Naive thymus-derived CD4-positive, alpha-beta T cell (primary cell): ENCODE measurements at regions of chr17 and their contacts with region 1.

Region 1: GRCh38 chr17:29180034-29180787 is at the start of gene MYO18A:
- DNase-seq: peak; percentile 58 to 85 (median 71)
- ATAC-seq: peak; percentile 98
- H3K4me3 ChIP-seq: peak within 1 kb of the TSS; percentile 37
- H3K4me3 Mint-ChIP-seq: peak within 1 kb of the TSS; percentile 40 to 82 (median 56)
- H3K27ac ChIP-seq: no peak within 1 kb of the TSS
- H3K27ac Mint-ChIP-seq: peak within 1 kb of the TSS in 7 of 9 donors; percentile 9 to 70 (median 48)
- H3K4me1 ChIP-seq: peaks cover 10 to 13% of the 10 kb centered on the region in 2 donors
- H3K4me1 Mint-ChIP-seq: peaks cover 5 to 33% (median 19%) of the 10 kb centered on the region in 7 donors
- H3K27me3 ChIP-seq: no peaks in the 10 kb centered on the region
- H3K27me3 Mint-ChIP-seq: peaks cover 0 to 13% (median 0%) of the 10 kb centered on the region in 5 donors
- total RNA-seq, gene MYO18A: 89.5 to 144 (median 103) TPM

Region 2: DNA sequence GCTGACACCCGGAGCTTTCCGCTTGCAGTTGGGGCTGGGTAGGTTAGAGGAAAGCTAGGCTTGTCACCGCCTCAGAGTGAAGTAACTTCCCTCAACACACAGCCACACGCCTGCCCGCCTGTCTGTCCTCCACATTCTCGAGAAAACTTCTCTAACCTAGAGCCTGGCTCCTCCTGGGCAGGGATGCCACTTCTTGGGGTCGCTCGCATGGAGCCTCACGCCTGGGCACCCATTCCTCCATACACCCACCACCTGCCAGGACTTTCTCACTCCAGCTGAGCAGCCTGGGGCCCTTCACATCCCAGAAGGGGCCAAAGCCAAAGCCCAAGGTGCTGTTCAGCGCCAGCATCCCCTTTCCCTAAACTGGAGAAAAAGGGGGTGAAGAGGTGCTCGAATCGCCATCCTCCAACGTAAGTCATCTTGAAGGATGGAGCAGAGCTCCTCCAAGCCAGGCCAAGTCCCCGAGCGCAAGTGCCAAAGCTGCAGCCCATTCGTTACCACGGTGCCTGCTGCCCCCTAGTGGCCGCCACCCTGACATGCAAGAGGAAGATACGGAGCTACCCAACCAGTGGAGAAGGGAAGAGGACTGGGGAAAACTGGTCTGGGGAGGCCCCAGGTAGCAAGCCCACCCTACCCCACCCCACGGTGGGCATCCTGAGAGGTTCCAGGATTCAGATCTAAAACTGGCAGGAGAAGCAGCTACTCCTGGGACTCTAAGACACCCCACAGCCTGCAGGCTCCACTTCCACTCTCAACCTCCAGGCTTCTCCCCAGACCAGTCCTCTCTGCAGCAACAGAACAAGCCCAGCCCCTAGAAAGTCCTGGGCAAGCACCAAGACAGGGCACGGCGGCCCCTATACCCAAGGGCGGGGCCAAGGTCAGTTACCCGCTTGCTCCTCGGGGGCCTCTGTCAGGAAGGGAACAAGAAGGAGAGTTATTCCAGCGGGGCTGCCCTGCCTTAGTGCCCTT is 63.1 kb before region 1 on chr17:
- CTCF ChIA-PET with region 1: interaction called, 16 read pairs
- POLR2A ChIA-PET with region 1: interaction called, 3 read pairs
- intact Hi-C with region 1: loop called in 1 of 2 experiments (anchors 2 kb)
- DNase-seq: peak; percentile 49 to 81 (median 69)
- ATAC-seq: peak; percentile 89
- H3K4me3 ChIP-seq: no peak overlapping the region
- H3K4me3 Mint-ChIP-seq: peak overlapping the region in 1 of 10 donors; percentile 44
- H3K27ac ChIP-seq: no peak overlapping the region
- H3K27ac Mint-ChIP-seq: peak overlapping the region in 5 of 9 donors; percentile 54 to 74 (median 61)
- H3K4me1 ChIP-seq: no peaks in the 10 kb centered on the region
- H3K4me1 Mint-ChIP-seq: peaks cover 0 to 11% (median 5%) of the 10 kb centered on the region in 7 donors
- H3K27me3 ChIP-seq: no peaks in the 10 kb centered on the region
- H3K27me3 Mint-ChIP-seq: no peaks in the 10 kb centered on the region

Region 3: DNA sequence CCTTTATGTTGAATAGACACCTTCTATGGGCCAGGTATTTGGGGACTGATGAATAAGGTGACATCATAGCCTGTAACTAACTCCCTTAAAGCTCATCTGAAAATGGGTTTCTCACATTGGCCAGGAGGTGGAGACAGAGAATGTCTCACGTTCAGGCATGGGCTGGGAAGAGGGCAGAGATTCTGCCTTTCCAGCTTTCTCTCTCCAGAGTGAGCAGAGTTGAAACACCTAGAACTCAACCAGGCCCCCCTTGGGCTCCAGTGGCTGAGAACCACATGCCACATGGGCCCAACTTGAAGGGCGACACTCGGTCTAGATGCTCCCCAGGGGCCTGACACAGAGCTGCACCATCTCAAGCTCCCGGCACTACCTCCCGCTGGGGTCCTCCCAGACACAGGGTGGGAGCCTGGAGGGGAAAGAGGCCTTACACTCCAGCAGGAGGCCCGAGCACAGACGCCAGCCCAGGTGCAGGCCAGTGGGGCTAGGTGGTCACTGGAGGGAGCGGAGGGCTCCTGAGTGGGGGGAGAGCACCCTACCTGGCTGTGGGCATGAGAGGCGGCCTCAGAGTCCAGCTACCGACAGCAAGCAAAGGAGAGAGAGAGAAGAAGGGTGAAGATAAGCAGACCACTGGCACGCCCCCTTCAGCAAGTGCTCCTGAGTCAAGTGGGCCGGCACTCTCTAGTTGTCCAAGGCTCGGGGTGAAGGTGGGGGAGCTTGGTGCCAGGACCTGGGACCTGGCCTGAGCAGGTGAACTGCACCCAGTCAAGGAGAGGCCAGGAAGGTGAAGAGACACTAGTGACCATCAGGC is 55.9 kb before region 1 on chr17:
- CTCF ChIA-PET with region 1: interaction called, 35 read pairs
- POLR2A ChIA-PET with region 1: interaction called, 8 read pairs
- intact Hi-C with region 1: loop called (anchors 1 kb)
- DNase-seq: peak in 6 of 9 donors; percentile 34 to 59 (median 48)
- ATAC-seq: peak; percentile 87
- H3K4me3 ChIP-seq: no peak overlapping the region
- H3K4me3 Mint-ChIP-seq: no peak overlapping the region
- H3K27ac ChIP-seq: no peak overlapping the region
- H3K27ac Mint-ChIP-seq: peak overlapping the region in 2 of 9 donors; percentile 54 to 55
- H3K4me1 ChIP-seq: no peaks in the 10 kb centered on the region
- H3K4me1 Mint-ChIP-seq: peaks cover 0 to 16% (median 5%) of the 10 kb centered on the region in 7 donors
- H3K27me3 ChIP-seq: no peaks in the 10 kb centered on the region
- H3K27me3 Mint-ChIP-seq: no peaks in the 10 kb centered on the region

Region 4: GRCh38 chr17:29140051-29140621 is 40.1 kb before region 1 on chr17:
- CTCF ChIA-PET with region 1: interaction called, 230 read pairs
- POLR2A ChIA-PET with region 1: interaction called, 11 read pairs
- intact Hi-C with region 1: loop called in 1 of 2 experiments (anchors 1 kb)
- DNase-seq: peak in 8 of 9 donors; percentile 48 to 81 (median 51)
- ATAC-seq: peak; percentile 73
- H3K4me3 ChIP-seq: peak overlapping the region; percentile 76
- H3K4me3 Mint-ChIP-seq: peak overlapping the region; percentile 83 to 98 (median 91)
- H3K27ac ChIP-seq: peak overlapping the region; percentile 79
- H3K27ac Mint-ChIP-seq: peak overlapping the region; percentile 88 to 98 (median 96)
- H3K4me1 ChIP-seq: peaks cover 35 to 43% of the 10 kb centered on the region in 2 donors
- H3K4me1 Mint-ChIP-seq: peaks cover 54 to 75% (median 66%) of the 10 kb centered on the region in 7 donors
- H3K27me3 ChIP-seq: no peaks in the 10 kb centered on the region
- H3K27me3 Mint-ChIP-seq: no peaks in the 10 kb centered on the region

Region 5: GRCh38 chr17:29155227-29155965 is 24.8 kb before region 1 on chr17:
- CTCF ChIA-PET with region 1: interaction called, 230 read pairs
- POLR2A ChIA-PET with region 1: interaction called, 27 read pairs
- intact Hi-C with region 1: loop called in 1 of 2 experiments (anchors 1 kb)
- DNase-seq: peak in 1 of 9 donors; percentile 68
- ATAC-seq: peak; percentile 85
- H3K4me3 ChIP-seq: no peak overlapping the region
- H3K4me3 Mint-ChIP-seq: peak overlapping the region in 8 of 10 donors; percentile 10 to 75 (median 44)
- H3K27ac ChIP-seq: no peak overlapping the region
- H3K27ac Mint-ChIP-seq: peak overlapping the region in 7 of 9 donors; percentile 25 to 91 (median 48)
- H3K4me1 ChIP-seq: peaks cover 10 to 14% of the 10 kb centered on the region in 2 donors
- H3K4me1 Mint-ChIP-seq: peaks cover 20 to 58% (median 23%) of the 10 kb centered on the region in 7 donors
- H3K27me3 ChIP-seq: no peaks in the 10 kb centered on the region
- H3K27me3 Mint-ChIP-seq: no peaks in the 10 kb centered on the region

Region 6: DNA sequence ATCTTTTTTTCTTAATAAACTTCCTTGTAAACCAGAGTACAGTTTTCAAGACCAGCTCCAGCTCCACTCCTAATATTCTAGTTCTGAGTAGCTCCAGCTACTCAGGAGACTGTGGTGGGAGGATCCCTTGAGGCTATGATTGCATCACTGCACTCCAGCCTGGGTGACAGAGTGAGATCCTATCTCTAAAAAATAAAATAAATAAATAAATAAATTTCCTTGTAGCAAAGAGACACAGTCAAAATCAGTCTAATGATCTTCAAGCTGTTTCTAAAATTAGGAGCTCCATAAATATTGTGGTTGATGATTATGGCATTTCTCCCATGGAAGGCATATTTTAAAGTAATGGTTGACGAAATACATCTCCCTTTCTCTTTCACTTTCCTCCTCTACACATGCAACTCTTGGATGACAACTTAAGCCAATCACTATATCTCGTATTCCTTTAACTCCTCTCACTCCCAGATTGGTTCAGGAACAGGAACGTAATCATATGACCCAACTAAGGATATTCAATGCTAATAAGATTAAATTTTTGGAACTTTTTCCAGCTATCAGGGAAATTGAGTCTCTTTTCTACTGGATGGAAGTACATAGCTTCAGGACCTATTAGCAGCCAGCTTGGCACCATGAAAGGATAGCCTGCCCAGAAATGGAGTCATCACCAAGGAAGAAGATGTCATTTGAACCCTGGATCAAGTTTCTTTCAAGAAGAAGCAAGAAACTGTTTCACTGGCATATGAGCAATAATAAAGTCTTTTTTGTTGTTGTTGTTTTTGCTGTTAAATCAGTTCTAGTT is 167.8 kb after region 1 on chr17:
- CTCF ChIA-PET with region 1: no interaction called
- POLR2A ChIA-PET with region 1: no interaction called
- intact Hi-C with region 1: no loop called
- DNase-seq: no peak
- ATAC-seq: no peak
- H3K4me3 ChIP-seq: no peak overlapping the region
- H3K4me3 Mint-ChIP-seq: no peak overlapping the region
- H3K27ac ChIP-seq: no peak overlapping the region
- H3K27ac Mint-ChIP-seq: no peak overlapping the region
- H3K4me1 ChIP-seq: no peaks in the 10 kb centered on the region
- H3K4me1 Mint-ChIP-seq: peaks cover 0 to 1% (median 0%) of the 10 kb centered on the region in 7 donors
- H3K27me3 ChIP-seq: no peaks in the 10 kb centered on the region
- H3K27me3 Mint-ChIP-seq: peaks cover 0 to 29% (median 0%) of the 10 kb centered on the region in 5 donors